ENCODE measurements at regions of chr13 and their contacts with region 1.

Region 1: DNA sequence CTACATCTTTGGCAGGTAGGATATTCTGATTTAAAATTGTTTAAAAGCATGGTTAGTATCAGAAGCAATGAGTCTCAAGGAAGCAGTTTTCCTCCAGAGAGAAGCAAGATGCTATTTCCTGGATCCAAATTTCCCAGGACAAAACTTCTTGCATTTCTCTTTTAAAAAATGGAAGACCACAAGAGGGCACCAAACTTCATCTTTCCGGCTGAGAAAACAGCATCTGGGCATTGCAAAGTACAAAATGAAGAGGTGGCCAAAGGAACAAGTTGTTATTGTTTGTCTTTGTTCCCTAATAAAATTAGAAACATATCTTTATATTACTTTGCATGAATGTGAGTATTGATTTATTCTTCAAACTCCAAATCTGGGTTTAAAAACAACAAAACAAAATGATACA is 60.0 kb upstream of the LRCH1 start:
- DNase-seq: peak; percentile 11
- H3K4me3 Mint-ChIP-seq: no peak overlapping the region
- H3K27ac Mint-ChIP-seq: no peak overlapping the region
- H3K4me1 Mint-ChIP-seq: no peaks in the 10 kb centered on the region
- H3K27me3 Mint-ChIP-seq: no peaks in the 10 kb centered on the region

Region 2: GRCh38 chr13:45807520-45808099 is 685.3 kb before region 1 on chr13:
- CTCF ChIA-PET with region 1: no interaction called
- intact Hi-C with region 1: no loop called
- DNase-seq: peak; percentile 55
- H3K4me3 Mint-ChIP-seq: no peak overlapping the region
- H3K27ac Mint-ChIP-seq: no peak overlapping the region
- H3K4me1 Mint-ChIP-seq: no peaks in the 10 kb centered on the region
- H3K27me3 Mint-ChIP-seq: no peaks in the 10 kb centered on the region

Region 3: GRCh38 chr13:46721054-46721453 is 228.1 kb after region 1 on chr13:
- CTCF ChIA-PET with region 1: interaction called, 6 read pairs
- intact Hi-C with region 1: loop called (anchors 1 kb)
- DNase-seq: peak; percentile 67
- H3K4me3 Mint-ChIP-seq: no peak overlapping the region
- H3K27ac Mint-ChIP-seq: no peak overlapping the region
- H3K4me1 Mint-ChIP-seq: no peaks in the 10 kb centered on the region
- H3K27me3 Mint-ChIP-seq: no peaks in the 10 kb centered on the region

Region 4: DNA sequence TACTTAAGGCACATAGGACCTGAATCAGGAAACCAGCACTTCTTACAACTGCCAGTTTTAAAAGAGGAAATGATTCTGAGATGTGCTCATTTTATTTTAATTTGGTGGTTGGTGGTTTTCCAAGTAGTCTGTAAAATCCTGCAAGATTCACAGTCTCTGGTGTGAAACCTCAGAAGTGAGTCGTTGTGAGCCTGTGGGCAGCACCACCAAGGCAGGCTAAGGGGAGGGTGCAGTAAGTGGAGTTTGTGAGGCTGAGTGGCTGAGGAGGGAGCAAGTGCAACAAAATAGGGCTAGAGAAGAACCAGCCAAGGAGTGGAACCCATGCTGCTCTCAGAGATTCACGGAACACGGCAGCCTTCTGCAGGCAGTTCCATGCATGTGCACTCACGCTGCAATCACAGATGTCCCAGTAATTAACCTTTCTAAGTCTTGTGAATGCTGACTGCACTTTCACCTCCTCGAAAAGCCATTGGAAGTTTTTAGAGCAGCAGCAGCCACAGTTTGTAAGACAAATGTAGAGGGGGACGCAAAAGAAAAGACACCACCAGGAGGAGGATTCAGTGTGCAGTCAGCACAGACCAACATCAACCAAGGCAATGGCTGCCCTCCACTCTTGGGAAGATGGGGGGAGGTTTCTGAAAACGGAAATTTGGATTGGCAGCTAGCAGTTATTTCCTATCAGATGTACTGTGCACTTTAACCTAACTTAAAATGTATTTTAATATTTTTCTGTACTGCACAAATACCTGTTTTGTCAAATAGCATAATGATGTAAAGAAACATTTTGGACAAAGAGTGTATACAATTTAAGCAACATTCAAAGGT is 259.1 kb after region 1 on chr13:
- CTCF ChIA-PET with region 1: interaction called, 6 read pairs
- intact Hi-C with region 1: loop called (anchors 1 kb)
- DNase-seq: peak; percentile 74
- H3K4me3 Mint-ChIP-seq: no peak overlapping the region
- H3K27ac Mint-ChIP-seq: peak overlapping the region; percentile 57
- H3K4me1 Mint-ChIP-seq: peaks cover 14% of the 10 kb centered on the region
- H3K27me3 Mint-ChIP-seq: no peaks in the 10 kb centered on the region

Region 5: DNA sequence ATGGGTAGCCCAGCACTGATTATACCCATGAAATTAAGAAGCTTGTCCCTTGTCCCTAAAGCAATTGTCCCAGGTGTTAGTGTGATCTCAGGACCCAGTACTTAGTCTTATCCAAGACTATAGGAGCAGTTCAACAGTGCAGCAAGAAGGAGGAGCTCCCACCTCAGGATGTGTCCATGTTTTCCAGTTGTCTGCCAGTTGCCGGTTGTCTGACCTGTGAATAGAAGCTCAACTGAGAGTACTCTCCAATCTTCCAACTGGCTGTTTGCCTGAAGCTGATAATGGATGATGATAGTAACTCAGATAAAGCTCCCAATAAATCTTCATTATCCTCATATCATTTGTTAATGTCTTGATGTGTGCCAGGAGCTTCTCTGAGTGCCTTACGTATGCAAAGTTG is 511.1 kb after region 1 on chr13:
- CTCF ChIA-PET with region 1: no interaction called
- intact Hi-C with region 1: no loop called
- DNase-seq: no peak
- H3K4me3 Mint-ChIP-seq: no peak overlapping the region
- H3K27ac Mint-ChIP-seq: no peak overlapping the region
- H3K4me1 Mint-ChIP-seq: no peaks in the 10 kb centered on the region
- H3K27me3 Mint-ChIP-seq: peaks cover 16% of the 10 kb centered on the region